Colonic mucosa (tissue), 4 donors: ENCODE measurements at regions of chr2 and their contacts with region 1.

Region 1: GRCh38 chr2:100381240-100381639 is 36.2 kb downstream of the CHST10 start:
- DNase-seq: peak; percentile 75
- H3K4me3 ChIP-seq: no peak overlapping the region
- H3K27ac ChIP-seq: no peak overlapping the region
- H3K4me1 ChIP-seq: no peaks in the 10 kb centered on the region
- H3K27me3 ChIP-seq: no peaks in the 10 kb centered on the region
- CTCF ChIP-seq: peak; percentile 78

Region 2: DNA sequence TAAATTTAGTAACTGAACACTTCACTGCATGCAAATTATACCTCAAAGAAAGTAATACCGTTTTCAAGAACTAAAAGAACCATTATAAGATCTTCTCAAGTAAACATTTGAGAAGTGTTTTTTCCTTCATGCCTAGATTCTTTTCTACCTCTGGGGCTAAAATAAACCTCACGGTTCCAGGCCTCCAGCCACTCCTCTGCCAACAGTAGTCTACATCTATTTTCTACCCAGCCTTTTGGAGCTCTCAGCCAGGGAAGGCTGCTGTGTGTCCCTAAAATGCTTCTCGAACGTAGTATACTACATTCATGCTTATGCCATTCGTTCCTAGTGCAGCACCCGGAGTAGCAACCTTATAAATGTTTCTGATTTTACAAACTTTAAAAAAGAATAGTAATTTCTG is 458.6 kb before region 1 on chr2:
- intact Hi-C with region 1: no loop called
- DNase-seq: no peak
- H3K4me3 ChIP-seq: no peak overlapping the region
- H3K27ac ChIP-seq: no peak overlapping the region
- H3K4me1 ChIP-seq: no peaks in the 10 kb centered on the region
- H3K27me3 ChIP-seq: no peaks in the 10 kb centered on the region
- CTCF ChIP-seq: no peak

Region 3: DNA sequence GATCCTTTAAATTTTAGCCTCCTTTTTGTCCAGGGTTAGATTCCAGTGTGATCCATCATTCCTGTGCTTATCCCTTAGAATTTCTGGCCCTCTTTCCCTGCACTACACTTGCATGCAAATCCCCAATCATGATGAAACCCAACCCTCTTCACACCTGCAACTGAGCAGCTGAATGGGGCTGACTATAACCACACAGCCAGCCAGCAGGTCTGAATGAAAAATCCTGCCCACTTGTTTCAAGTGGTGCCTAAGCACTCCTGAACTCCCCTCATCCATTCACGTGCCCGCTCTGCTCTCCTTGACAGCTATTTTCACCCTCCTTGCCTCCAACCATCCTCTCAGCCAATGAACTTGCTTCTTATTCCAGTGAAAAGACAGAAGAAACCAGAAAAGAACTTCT is 158.4 kb before region 1 on chr2:
- intact Hi-C with region 1: no loop called
- DNase-seq: no peak
- H3K4me3 ChIP-seq: no peak overlapping the region
- H3K27ac ChIP-seq: no peak overlapping the region
- H3K4me1 ChIP-seq: no peaks in the 10 kb centered on the region
- H3K27me3 ChIP-seq: no peaks in the 10 kb centered on the region
- CTCF ChIP-seq: no peak

Region 4: DNA sequence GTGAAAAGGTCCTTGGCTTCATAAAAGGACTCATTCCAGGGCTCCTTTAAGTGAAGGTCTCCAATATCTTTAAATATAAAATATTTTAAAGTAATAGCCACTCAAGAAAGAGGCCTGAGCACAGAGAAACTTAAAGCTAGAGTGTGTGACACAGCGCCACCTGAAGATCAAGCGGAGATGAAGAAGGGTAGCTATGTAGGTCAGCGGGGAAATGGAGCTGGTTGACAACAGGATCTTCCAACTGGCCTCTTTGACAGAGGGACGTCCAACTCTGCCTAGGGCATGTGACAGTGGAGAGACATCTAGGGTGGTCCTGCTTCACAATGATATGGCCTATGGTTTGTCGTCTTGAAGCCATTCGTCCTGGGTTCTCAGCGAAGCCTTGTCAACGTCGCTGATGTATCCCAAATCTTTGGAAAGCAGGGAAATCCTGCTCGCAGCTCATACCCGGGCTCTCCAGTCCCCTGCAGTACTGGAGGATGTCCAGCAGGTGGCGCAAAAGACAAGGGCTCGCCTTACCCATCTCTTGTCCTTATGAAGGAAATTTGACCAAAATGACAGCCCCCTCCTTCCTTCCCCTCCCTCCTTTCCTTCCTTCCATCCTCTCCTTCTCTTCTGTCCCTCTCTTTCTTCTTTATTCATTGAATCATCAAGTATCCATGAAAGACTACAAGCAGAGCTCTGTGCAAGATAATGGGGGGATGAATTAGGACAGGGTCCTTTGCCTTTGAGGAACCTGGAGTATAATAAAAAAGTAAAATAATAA is 118.5 kb before region 1 on chr2:
- intact Hi-C with region 1: loop called (anchors 5 kb)
- DNase-seq: peak; percentile 54
- H3K4me3 ChIP-seq: no peak overlapping the region
- H3K27ac ChIP-seq: no peak overlapping the region
- H3K4me1 ChIP-seq: no peaks in the 10 kb centered on the region
- H3K27me3 ChIP-seq: no peaks in the 10 kb centered on the region
- CTCF ChIP-seq: peak; percentile 96